Endothelial cell of umbilical vein (primary cell): ENCODE measurements at regions of chr9 and their contacts with region 1.

Region 1: GRCh38 chr9:2448193-2448738 is 173.3 kb upstream of the VLDLR start:
- DNase-seq: no peak
- H3K4me3 ChIP-seq: no peak overlapping the region
- H3K27ac ChIP-seq: no peak overlapping the region
- H3K4me1 ChIP-seq: no peaks in the 10 kb centered on the region
- H3K27me3 ChIP-seq: no peaks in the 10 kb centered on the region
- CTCF ChIP-seq: no peak
- POLR2A ChIP-seq: no peak

Region 2: DNA sequence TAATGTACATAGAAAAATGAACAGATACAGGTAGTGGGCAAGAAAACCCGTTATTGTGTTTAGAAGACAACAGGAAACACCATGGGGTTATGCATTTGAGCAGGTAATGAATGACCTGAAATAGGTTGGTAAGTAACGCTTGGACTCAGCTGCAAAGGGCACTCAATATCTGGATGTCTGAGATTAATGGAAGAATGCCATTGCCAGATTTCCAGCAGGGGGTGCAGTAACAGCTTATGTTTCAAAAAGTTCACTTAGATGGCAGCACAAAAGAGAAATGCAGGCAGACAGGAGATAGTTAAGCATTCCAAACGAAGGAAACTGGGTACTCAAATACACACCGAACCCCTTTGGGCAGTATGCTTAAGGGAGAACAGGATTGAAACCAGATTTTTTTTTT is 112.2 kb before region 1 on chr9:
- CTCF ChIA-PET with region 1: no interaction called
- POLR2A ChIA-PET with region 1: no interaction called
- dilution Hi-C with region 1: no loop called
- intact Hi-C with region 1: no loop called
- DNase-seq: peak; percentile 8
- H3K4me3 ChIP-seq: no peak overlapping the region
- H3K27ac ChIP-seq: no peak overlapping the region
- H3K4me1 ChIP-seq: no peaks in the 10 kb centered on the region
- H3K27me3 ChIP-seq: no peaks in the 10 kb centered on the region
- CTCF ChIP-seq: peak in 1 of 2 donors; percentile 12
- POLR2A ChIP-seq: no peak

Region 3: DNA sequence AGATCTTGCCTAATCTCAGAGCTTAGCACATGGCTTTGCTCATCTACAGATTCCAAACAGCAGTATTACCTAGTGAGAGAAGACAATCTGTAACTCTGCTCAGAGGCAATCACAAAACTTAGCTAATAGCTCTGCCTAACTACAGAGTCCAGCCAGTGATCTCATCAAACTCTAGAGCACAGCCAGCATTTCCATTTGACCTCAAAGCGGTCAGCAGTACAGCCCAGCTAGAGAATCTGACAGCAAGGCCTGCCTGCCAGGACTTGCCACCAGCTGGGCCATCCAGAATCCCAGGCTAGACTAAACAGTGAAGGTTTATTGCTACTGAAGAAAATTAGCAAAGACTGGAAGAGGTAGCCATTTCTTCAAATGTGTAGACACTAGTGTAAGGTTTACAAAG is 44.6 kb before region 1 on chr9:
- CTCF ChIA-PET with region 1: no interaction called
- POLR2A ChIA-PET with region 1: no interaction called
- dilution Hi-C with region 1: no loop called
- intact Hi-C with region 1: no loop called
- DNase-seq: no peak
- H3K4me3 ChIP-seq: no peak overlapping the region
- H3K27ac ChIP-seq: no peak overlapping the region
- H3K4me1 ChIP-seq: no peaks in the 10 kb centered on the region
- H3K27me3 ChIP-seq: no peaks in the 10 kb centered on the region
- CTCF ChIP-seq: no peak
- POLR2A ChIP-seq: no peak

Region 4: DNA sequence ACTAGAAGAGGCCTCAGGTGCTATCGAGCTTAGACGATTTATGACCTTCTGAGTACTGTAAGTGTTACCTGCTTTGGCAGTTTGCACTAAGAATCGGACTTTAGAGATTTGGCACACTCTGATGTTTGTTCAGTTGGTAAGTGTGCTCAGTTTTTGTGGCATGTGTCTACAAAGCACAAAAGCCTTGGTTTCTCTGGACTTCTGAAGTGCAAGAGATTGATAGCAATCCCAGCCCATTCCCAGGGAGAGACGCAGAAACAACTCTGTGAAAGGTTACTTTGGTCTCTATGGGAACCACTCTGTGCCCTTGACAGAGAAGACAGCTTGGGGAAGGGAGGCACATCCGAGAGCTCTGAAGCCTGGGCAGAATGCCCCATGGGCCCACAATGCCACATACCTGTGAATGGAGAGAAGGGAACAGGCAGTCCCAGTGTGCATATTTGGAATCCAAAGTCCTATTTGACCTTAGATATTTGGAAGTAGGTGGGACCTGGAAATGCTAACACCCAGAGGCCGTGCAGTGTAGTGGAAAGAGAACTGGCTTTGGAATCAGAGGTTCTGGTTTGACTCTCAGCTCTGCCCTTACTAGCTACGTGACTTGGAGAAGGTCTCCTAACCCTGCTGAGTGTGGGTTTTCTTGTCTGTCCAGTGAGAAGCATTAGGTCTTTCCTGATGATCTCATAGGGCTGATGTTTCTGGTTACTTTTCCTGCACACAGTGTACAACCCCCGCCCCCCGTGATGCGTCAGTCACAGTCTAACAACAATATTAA is 21.0 kb before region 1 on chr9:
- CTCF ChIA-PET with region 1: no interaction called
- POLR2A ChIA-PET with region 1: no interaction called
- dilution Hi-C with region 1: no loop called
- intact Hi-C with region 1: no loop called
- DNase-seq: no peak
- H3K4me3 ChIP-seq: no peak overlapping the region
- H3K27ac ChIP-seq: no peak overlapping the region
- H3K4me1 ChIP-seq: no peaks in the 10 kb centered on the region
- H3K27me3 ChIP-seq: no peaks in the 10 kb centered on the region
- CTCF ChIP-seq: no peak
- POLR2A ChIP-seq: no peak

Region 5: GRCh38 chr9:2502760-2503159 is 54.5 kb after region 1 on chr9:
- CTCF ChIA-PET with region 1: no interaction called
- POLR2A ChIA-PET with region 1: no interaction called
- dilution Hi-C with region 1: no loop called
- intact Hi-C with region 1: loop called (anchors 10 kb)
- DNase-seq: no peak
- H3K4me3 ChIP-seq: no peak overlapping the region
- H3K27ac ChIP-seq: no peak overlapping the region
- H3K4me1 ChIP-seq: no peaks in the 10 kb centered on the region
- H3K27me3 ChIP-seq: peaks cover 6 to 7% of the 10 kb centered on the region in 2 experiments
- CTCF ChIP-seq: no peak
- POLR2A ChIP-seq: no peak

Region 6: DNA sequence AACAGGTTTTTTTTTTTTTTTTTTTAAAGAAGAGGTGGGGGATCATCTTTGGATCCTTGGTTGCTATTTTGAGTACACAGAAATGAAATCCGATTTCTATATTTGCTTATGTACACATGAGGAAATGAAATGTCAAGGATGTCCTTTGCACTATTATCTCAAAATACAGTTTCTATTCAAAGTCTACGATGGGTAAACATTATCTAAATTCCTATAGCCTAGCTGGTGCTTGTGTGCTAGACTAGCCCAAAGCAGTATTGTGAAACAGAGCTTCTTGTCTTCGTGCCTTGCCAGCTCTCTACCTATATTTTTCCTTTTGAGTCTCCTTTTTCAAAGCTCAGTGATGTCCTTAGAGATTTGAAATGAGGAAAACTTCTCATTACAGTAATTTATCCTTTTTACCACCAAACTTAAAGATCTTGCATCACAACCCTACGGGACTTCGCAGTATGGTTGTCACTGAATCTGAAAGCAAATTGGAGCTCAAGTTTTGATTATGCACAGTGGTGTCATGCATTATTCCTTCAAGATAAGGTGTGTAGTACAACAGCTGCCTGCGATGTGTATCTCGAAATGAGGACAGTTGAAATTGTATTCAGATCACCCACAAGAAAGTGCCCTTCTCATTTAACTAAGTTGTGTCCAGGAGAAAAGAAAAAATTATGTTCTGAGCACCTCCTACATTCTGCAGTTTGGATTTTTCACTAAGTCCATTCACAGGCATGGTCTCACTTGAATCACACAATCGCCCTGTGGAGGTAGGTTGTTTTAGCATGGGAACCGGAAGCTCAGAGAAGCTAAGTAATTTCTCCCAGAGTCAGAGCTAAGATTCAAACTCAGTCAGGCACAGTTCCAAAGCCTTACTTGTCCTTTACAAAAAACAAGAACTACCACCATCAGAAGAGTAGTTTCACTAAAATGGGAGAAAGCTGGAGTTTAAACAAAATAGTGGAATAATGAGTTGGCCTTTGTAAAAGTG is 1472.6 kb after region 1 on chr9:
- CTCF ChIA-PET with region 1: no interaction called
- POLR2A ChIA-PET with region 1: no interaction called
- dilution Hi-C with region 1: no loop called
- intact Hi-C with region 1: no loop called
- DNase-seq: no peak
- H3K4me3 ChIP-seq: no peak overlapping the region
- H3K27ac ChIP-seq: no peak overlapping the region
- H3K4me1 ChIP-seq: no peaks in the 10 kb centered on the region
- H3K27me3 ChIP-seq: peaks cover 0 to 5% of the 10 kb centered on the region in 2 experiments
- CTCF ChIP-seq: no peak
- POLR2A ChIP-seq: no peak